Aorta (tissue), 5 donors: ENCODE measurements at regions of chr16 and their contacts with region 1.

Region 1: DNA sequence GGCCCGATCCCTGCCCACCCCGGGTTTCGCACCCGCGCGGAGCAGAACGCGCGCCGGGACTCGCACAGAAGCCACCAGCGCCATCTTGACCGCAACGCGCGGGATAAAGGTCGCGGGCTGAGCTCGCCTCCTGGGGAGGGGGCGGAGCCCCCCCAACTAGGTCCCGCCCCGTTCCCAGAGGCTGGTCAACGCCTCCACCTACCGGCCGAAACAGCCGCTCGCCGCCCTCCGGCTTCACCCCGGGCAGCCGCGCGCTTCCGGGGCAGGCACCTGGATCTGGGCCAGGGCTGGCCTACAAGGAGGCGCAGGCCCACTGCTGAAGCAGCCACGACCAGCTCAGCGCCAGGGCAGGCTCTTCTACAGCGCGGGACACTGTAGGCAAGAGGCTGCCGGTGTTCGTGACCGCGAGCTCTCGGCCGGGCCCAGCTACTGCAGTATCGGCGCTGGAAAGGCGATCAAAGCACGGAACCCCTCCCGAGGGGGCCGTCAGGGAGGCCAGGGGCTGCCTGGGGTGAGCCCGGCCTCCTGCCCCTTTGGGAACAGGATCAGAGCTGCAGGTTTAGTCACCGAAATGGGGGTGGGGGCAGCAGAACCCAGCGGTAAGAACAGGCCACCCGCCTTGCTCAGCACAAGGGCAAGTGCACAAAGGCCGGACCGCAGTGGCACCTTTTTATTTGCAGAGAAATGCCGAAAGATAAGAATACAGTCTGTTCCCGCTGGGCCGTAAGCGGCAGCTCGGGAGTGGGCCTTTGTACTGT is at the start of gene ECI1:
- DNase-seq: peak; percentile 98 to 99
- ATAC-seq: peak; percentile 98
- H3K4me3 ChIP-seq: peak within 1 kb of the TSS; percentile 79 to 98
- H3K27ac ChIP-seq: peak within 1 kb of the TSS in 1 of 2 donors; percentile 73
- H3K4me1 ChIP-seq: no peaks in the 10 kb centered on the region
- H3K27me3 ChIP-seq: no peaks in the 10 kb centered on the region
- total RNA-seq, gene ECI1: 28.4 to 31.3 TPM

Region 2: DNA sequence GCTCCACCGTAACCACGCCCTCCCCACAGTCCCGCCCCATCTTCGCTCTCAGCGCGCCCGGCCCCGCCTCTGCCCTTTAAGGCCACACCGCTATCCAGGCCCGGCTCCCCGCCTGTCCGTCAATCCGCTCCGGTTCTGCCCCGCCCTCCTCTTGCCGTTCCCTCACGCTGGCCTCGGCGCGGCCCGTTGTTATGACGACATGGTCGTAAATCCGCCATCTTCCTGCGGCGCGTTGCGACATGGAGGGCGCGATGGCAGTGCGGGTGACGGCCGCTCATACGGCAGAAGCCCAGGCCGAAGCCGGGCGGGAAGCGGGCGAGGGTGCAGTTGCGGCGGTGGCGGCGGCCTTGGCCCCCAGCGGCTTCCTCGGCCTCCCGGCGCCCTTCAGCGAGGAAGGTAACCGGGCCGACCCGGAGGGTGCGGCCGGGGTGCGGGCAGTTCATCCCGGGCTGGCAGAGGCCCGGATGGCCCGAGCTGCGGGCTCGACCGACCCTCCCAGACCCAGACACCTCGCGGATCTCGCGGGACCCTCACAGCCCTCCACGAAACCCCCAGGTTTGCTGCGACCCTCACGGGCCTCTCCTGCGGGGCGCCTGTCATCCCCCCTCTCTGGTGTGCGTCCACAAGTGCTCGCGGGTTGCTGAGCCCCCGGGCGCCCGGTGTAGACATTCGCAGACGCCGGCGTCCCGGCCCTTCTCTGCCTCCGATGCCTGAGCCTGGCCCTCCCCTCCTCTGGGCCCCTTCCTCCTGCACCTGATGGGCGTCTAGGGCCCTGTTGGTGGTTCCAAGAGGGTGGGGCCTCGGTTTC is 28.1 kb before region 1 on chr16 and contains the start of gene E4F1:
- intact Hi-C with region 1: loop called in 1 of 2 experiments (anchors 2 kb)
- DNase-seq: peak; percentile 100
- ATAC-seq: peak; percentile 99
- H3K4me3 ChIP-seq: peak within 1 kb of the TSS; percentile 43 to 82
- H3K27ac ChIP-seq: no peak within 1 kb of the TSS
- H3K4me1 ChIP-seq: no peaks in the 10 kb centered on the region
- H3K27me3 ChIP-seq: no peaks in the 10 kb centered on the region
- total RNA-seq, gene E4F1: 17.3 to 21.5 TPM